ENCODE measurements at regions of chr7 and their contacts with region 1.

Region 1: DNA sequence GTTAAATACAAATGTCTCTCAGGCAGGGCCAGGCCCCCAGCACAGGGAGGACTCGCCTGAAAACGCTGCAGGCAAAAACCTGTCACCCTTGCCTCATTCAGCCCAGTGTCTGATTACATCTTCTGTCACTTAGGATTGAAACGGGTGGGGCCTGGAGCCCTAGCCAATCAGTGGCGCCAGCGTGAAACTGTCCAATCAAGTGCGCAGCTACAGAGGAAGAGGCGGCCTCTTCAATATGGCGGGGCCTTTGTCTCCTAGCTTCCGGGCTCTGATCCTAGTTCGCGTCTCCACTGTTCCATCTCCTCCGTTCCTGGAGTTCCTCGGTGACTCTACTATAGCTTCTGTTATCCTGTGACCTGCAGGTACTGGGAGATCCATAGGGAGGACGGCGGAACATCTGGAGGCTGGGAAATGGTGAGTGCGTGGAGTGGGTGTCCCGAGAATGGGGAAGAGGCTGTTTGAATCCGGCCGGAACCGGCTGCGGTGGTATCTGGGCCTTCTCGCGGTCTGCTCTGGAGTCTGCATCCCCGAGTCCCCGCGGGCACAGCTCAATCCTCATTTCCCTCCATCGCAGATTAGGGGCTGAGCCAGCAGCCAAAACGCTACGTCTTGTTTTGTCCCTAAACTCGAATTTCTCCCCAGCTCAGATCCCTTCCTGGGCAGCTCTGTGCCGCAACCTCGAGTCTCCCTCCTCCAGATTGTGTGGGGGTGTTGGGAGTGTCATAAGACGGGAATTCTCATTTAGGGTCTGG is at the start of gene ZNF736:
- DNase-seq: peak; percentile 93
- total RNA-seq, gene ZNF736: 6.8 TPM

Region 2: DNA sequence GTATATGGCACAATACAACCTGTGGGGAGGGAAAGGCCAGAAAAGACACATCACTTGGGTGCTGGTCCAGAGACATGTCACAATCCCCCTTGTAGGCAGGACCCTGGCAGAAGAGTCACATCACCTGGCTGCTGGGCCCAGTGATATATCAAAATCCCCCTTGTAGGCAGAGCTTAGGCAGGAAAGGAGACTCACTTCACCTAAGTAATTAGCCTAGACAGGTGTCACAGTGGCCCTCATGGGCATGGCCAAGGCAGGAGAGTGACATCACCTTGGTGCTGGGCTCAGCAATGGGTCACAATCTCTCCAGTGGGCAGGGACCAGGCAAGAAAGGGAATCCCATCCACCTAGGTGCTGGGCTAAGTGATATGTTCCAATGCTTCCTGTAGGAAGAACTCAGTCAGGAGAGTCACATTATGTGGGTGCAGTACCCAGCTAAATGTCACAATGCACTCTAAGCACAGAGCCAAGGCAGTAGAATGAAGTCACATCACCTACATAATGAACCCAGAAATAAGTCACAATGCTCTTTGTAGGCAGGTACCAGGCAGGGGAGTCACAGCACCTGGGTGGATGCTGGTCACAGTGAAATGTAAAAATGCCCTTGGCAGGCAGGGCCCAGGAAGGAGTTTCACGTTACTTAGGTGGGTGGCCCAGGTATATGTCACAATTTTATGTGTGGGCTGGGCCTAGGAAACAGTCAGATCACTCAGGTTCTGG is 19.1 kb before region 1 on chr7:
- intact Hi-C with region 1: no loop called
- DNase-seq: no peak

Region 3: GRCh38 chr7:64463636-64464378 is 149.9 kb after region 1 on chr7:
- intact Hi-C with region 1: no loop called
- DNase-seq: peak; percentile 86

Region 4: GRCh38 chr7:64559206-64559605 is 245.3 kb after region 1 on chr7:
- intact Hi-C with region 1: loop called (anchors 5 kb)
- DNase-seq: no peak

Measured in cardiac septum (tissue), 1 donor.